ENCODE measurements at regions of chr19 and their contacts with region 1.

Region 1: DNA sequence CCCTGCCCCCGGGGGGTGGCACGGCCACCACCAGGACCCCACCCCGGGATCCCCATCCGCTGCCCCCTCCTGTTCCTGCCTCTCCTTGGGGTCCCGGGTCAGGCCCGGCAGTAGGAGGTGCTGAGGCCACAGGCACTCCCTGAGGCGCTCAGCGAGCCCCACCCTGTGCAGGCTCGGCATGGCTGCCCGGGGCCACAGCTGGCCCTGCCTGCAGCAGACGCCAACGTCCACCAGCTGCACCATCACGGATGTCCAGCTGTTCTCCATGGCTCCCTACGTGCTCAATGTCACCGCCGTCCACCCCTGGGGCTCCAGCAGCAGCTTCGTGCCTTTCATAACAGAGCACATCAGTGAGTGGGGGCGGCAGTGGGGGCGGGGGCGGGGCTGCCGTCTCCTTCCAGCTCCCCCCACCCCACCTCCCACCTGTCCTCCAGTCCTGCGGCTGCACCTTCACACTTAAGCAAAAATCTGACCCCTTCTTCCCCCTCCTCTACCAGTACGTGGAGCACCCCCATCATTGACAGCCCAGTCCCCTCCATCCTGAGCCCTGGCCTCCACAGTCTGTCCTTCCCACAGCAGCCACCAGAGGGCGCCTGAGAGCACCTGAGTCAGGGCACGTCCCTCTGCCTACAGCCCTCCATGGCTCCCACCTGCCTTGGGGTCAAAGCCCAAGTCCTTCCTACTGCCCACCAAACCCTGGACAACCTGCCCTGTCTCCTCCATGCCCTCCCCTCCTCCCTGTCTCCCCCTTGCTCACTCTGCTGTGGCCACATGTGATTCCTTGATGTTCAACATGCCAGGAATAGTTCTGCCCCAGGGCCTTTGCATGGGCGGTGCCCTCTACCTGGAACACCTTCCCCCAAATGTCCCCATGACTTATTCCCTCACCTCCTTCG is 3.9 kb downstream of the EBI3 start:
- DNase-seq: peak; percentile 68
- H3K4me3 ChIP-seq: no peak overlapping the region
- H3K27ac ChIP-seq: no peak overlapping the region
- H3K4me1 ChIP-seq: peaks cover 7% of the 10 kb centered on the region
- H3K27me3 ChIP-seq: no peaks in the 10 kb centered on the region
- CTCF ChIP-seq: peak; percentile 83

Region 2: GRCh38 chr19:4217429-4218264 is 15.6 kb before region 1 on chr19:
- CTCF ChIA-PET with region 1: interaction called, 18 read pairs
- POLR2A ChIA-PET with region 1: no interaction called
- intact Hi-C with region 1: no loop called
- DNase-seq: no peak
- H3K4me3 ChIP-seq: no peak overlapping the region
- H3K27ac ChIP-seq: no peak overlapping the region
- H3K4me1 ChIP-seq: no peaks in the 10 kb centered on the region
- H3K27me3 ChIP-seq: no peaks in the 10 kb centered on the region
- CTCF ChIP-seq: no peak